Right ventricle myocardium inferior (tissue), 1 donor: ENCODE measurements at regions of chr10 and their contacts with region 1.

Region 1: GRCh38 chr10:125060826-125061556 is 99.4 kb downstream of the CTBP2 start:
- DNase-seq: peak; percentile 92
- ATAC-seq: peak; percentile 51

Region 2: DNA sequence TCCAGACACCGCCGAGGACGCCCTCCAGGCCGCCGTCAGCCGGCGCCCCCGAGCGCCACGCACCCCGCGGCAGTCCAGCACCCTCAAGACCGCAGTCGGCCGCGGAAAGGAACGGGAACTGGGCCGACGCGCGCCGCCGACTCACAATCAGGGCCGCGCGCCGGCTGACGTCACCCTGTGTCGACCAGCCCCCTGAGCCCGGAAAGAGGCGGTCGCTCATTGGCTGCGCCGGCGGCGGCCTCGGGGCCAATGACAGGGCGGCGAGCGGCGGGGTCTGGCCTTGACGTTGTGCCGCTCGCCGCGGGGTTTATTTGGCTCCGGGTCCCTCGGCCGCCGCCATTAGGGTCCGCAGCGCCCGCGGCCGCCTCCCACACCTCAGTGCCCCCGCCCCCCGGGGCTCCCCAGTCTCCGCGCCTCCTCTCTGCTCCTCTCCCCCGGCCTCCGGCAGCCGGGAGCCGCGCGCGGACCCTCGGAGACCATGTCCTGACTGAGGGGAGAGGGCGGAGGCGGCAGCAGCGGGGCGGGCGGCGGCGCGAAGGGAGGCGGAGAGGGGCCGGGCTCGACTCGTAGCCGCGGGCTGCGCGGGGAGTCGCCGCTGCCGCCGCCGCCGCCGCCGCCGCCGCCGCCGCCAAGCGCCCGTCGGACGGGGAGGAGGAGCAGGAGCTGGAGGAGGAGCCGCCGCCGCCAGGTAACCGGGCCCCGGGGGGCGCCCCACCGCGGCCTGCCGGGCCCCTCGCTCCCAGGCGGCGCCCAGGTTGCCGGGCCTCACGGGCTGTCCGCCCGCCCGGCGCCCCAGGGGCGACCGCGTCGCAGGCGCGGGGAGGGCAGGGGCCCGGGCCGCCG is 144.2 kb before region 1 on chr10:
- intact Hi-C with region 1: loop called (anchors 5 kb)
- DNase-seq: peak; percentile 100
- ATAC-seq: peak; percentile 99

Region 3: DNA sequence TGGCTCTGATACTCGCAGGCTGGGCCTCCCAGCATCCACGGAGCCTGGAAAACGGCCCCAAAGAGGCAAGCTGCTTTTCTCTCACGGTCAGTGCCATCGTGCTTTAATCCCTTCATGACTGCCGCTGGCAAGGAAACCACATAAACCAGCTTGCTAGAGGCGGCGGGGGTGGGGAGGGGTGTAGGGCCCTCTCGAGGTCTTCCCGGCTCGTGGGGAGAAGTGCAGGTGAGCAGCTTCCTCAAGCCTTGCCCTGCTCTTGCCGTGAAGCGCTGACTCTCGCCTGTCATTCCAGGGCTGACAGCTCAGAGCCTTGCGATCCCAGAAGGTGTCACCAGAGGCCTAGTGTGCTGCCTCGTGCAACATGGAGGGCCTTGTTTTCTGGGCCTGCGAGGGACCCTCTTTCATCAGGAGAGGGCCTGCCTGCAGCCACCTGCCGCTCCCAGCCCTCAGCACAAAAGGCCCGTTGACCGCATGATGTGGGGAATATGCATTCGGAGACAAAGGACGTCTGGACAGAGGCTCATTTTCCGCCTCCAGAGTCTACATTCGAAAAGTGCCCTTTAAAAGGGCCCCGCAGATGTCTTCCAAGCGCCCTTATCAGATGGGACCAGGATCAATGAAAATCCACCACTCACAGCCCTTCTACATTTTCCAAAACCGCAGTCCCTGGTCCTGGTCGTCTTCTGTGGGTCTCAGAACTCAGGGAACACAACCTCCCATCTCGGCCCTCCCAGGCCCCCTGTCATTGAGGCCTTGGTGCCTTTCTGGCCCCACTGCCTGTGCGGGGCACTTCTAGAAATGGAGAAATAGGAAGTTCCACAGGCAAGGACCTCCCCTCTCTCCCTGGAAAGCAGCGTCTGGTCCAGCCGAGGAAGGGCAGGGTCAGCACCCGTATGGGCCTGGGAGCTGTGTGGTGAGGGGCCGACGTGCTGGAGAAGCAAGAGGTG is 60.4 kb before region 1 on chr10:
- intact Hi-C with region 1: loop called (anchors 5 kb)
- DNase-seq: no peak
- ATAC-seq: peak; percentile 25

Region 4: GRCh38 chr10:125343118-125343925 is 282.3 kb after region 1 on chr10:
- intact Hi-C with region 1: loop called (anchors 5 kb)
- DNase-seq: no peak
- ATAC-seq: no peak